ENCODE measurements at regions of chr18 and their contacts with region 1.

Region 1: DNA sequence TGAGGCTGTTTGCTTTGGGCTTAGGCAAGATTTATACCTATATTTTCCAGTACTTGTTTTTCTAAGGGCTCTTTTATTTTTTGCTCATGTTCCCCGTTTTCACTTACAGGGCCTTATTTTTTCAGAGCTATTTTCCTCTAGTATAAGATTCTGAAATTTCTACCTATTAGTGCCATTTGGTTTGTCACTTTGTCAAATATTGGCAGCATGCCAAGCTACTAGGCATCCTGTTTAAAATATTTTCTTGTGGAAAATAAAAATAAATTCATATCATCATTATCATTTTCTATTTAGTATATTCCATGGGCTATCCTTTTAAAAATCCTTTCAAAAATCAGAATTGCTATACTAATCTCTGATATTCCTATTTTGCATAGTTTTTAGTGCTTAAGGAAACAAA is 64.8 kb upstream of the CHST9 start:
- DNase-seq: no peak
- ATAC-seq: no peak
- H3K4me3 ChIP-seq: no peak overlapping the region
- H3K4me3 Mint-ChIP-seq: no peak overlapping the region
- H3K27ac ChIP-seq: no peak overlapping the region
- H3K27ac Mint-ChIP-seq: no peak overlapping the region
- H3K4me1 ChIP-seq: no peaks in the 10 kb centered on the region
- H3K4me1 Mint-ChIP-seq: no peaks in the 10 kb centered on the region
- H3K27me3 ChIP-seq: no peaks in the 10 kb centered on the region
- H3K27me3 Mint-ChIP-seq: no peaks in the 10 kb centered on the region
- CTCF ChIP-seq: no peak

Region 2: DNA sequence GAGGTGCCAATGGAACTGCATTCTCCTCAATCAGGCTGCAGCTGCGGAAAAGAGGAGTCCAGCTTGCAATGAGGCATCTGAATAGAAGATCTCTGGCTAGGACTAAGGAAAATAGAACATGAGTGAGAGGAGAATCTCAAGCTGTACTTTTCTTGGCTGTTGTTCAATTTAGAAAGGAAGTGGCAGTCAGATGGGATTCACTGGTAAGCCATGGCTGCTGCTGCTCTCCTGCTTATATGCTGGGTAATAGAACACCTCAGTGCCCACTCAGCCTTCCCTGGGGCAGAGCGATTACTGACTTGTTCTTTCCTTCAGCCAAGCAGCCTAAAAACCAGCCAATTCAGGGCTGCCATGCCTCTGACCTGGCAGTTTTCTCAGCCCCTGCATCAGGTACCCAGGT is 47.2 kb before region 1 on chr18:
- CTCF ChIA-PET with region 1: no interaction called
- POLR2A ChIA-PET with region 1: no interaction called
- intact Hi-C with region 1: loop called in 1 of 2 experiments (anchors 5 kb)
- DNase-seq: no peak
- ATAC-seq: no peak
- H3K4me3 ChIP-seq: no peak overlapping the region
- H3K4me3 Mint-ChIP-seq: no peak overlapping the region
- H3K27ac ChIP-seq: no peak overlapping the region
- H3K27ac Mint-ChIP-seq: no peak overlapping the region
- H3K4me1 ChIP-seq: no peaks in the 10 kb centered on the region
- H3K4me1 Mint-ChIP-seq: no peaks in the 10 kb centered on the region
- H3K27me3 ChIP-seq: no peaks in the 10 kb centered on the region
- H3K27me3 Mint-ChIP-seq: no peaks in the 10 kb centered on the region
- CTCF ChIP-seq: no peak

Region 3: GRCh38 chr18:27263369-27263768 is 13.4 kb after region 1 on chr18:
- CTCF ChIA-PET with region 1: no interaction called
- POLR2A ChIA-PET with region 1: no interaction called
- intact Hi-C with region 1: loop called in 1 of 2 experiments (anchors 1 kb)
- DNase-seq: no peak
- ATAC-seq: no peak
- H3K4me3 ChIP-seq: no peak overlapping the region
- H3K4me3 Mint-ChIP-seq: no peak overlapping the region
- H3K27ac ChIP-seq: no peak overlapping the region
- H3K27ac Mint-ChIP-seq: no peak overlapping the region
- H3K4me1 ChIP-seq: no peaks in the 10 kb centered on the region
- H3K4me1 Mint-ChIP-seq: no peaks in the 10 kb centered on the region
- H3K27me3 ChIP-seq: no peaks in the 10 kb centered on the region
- H3K27me3 Mint-ChIP-seq: no peaks in the 10 kb centered on the region
- CTCF ChIP-seq: no peak